Right cardiac atrium (tissue), 5 donors: ENCODE measurements at regions of chr11 and their contacts with region 1.

Region 1: GRCh38 chr11:10307442-10308207 is 2.8 kb downstream of the ADM start:
- DNase-seq: peak; percentile 83 to 94 (median 94)
- ATAC-seq: peak; percentile 65 to 73
- H3K4me3 ChIP-seq: peak overlapping the region; percentile 48
- H3K27ac ChIP-seq: peak overlapping the region; percentile 85
- H3K4me1 ChIP-seq: peaks cover 4% of the 10 kb centered on the region
- H3K27me3 ChIP-seq: no peaks in the 10 kb centered on the region

Region 2: GRCh38 chr11:9757809-9758636 is 549.6 kb before region 1 on chr11:
- intact Hi-C with region 1: loop called (anchors 5 kb)
- DNase-seq: peak; percentile 90 to 97 (median 96)
- ATAC-seq: peak; percentile 72 to 75
- H3K4me3 ChIP-seq: peak overlapping the region; percentile 57
- H3K27ac ChIP-seq: peak overlapping the region; percentile 86
- H3K4me1 ChIP-seq: peaks cover 9% of the 10 kb centered on the region
- H3K27me3 ChIP-seq: no peaks in the 10 kb centered on the region

Region 3: DNA sequence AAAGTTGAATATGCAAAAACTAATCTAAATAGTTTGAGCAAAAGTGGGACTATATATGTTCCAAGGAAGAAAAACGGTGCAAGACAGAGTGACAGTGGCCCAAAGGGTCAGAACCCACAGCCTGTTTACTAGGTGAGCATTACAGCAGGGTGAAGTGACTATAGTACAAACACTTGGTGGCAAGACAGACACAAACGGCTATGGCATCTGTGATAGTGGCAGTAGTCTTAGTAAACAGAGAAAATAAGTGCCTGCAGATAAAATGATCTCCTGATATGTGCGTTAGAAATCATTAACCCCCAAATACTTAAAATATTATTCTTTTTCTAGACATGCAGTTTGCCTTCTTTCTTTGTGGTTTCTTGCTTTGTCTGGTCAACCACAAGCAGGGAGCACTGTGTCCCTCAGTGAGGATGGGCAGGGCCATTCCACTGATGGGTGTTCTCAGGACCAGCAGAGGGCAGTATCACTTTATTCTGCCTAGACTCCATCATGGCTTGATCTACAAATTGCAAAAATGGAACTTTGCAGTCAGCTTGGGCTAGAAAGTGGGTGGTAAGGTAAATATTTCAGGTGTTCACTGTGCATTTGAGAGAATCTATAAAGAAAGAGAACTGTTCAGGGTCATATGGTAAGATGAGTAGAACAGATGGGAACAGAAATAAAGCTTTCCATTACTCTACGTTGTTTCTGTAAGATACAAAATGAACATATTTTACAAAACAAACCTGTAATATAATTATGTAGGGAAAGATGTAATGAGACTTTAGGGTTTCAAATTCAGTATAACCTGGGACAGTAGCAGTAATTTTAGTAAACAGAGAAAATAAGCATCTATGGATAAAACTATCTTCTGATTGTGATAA is 445.5 kb before region 1 on chr11:
- intact Hi-C with region 1: loop called in 1 of 4 experiments (anchors 5 kb)
- DNase-seq: peak in 2 of 3 donors; percentile 17 to 57
- ATAC-seq: peak; percentile 83 to 91
- H3K4me3 ChIP-seq: no peak overlapping the region
- H3K27ac ChIP-seq: no peak overlapping the region
- H3K4me1 ChIP-seq: peaks cover 5% of the 10 kb centered on the region
- H3K27me3 ChIP-seq: no peaks in the 10 kb centered on the region

Region 4: GRCh38 chr11:9972989-9973388 is 334.6 kb before region 1 on chr11:
- intact Hi-C with region 1: loop called in 2 of 4 experiments (anchors 10 kb)
- DNase-seq: no peak
- ATAC-seq: peak; percentile 65 to 75
- H3K4me3 ChIP-seq: no peak overlapping the region
- H3K27ac ChIP-seq: no peak overlapping the region
- H3K4me1 ChIP-seq: no peaks in the 10 kb centered on the region
- H3K27me3 ChIP-seq: no peaks in the 10 kb centered on the region

Region 5: DNA sequence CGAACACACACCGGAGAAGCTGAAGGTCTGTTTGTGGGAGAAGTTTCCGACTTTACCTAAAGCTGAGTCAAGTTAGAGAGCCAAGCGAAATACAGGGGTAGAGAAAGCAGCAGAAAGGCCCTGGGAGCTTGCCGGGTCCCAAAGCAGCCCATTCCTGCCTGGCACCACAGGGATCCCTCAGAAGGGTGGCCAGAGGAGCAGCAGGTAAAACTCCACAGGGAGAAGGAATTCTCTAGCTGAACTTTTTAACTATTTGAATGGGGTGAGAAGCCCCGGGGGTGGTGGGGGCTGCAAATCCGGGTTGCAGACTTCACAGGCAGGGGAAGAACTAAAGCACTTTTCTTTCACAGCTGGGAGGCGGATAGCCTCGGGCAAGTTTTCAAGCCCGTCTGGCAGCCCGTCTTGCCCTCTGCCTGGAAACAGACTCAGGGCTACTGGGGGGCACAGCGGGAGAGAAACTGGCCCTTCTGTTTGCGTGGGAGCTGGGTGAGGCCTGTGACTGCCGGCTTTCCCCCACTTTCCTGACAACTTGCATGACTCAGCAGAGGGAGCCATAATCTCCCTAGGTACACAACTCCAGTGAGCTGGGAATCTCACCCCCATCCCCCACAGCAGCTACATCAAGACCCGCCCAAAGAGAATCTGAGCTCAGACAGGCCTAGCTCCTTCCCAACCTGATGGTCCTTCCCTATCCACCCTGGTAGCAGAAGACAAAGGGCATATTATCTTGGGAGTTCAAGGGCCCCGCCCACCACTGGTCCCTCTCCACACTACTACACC is 324.6 kb before region 1 on chr11:
- intact Hi-C with region 1: loop called in 3 of 4 experiments (anchors 5 to 10 kb)
- DNase-seq: no peak
- ATAC-seq: no peak
- H3K4me3 ChIP-seq: no peak overlapping the region
- H3K27ac ChIP-seq: no peak overlapping the region
- H3K4me1 ChIP-seq: no peaks in the 10 kb centered on the region
- H3K27me3 ChIP-seq: no peaks in the 10 kb centered on the region

Region 6: DNA sequence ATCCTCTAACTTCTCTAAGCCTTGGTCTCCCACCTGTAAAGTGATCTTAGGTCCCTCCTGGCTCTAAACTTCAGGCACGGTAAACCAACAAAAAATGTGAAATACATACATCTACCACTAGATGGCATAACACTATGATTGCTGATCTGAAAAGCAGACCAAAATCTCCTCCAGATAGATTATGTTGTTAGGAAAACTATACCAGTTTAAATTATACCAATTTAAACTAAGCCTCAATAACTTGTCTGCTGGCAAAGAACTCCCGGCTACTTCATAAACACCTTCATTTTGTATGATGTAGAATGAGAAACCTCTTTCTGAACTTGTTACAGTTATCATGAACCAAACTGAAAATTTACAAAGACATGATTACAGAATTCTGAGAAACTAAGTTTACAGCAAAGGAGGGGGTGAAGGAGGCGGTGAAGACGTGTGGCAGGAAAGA is 99.5 kb before region 1 on chr11:
- intact Hi-C with region 1: loop called in 2 of 4 experiments (anchors 5 kb)
- DNase-seq: no peak
- ATAC-seq: peak in 1 of 2 donors; percentile 53
- H3K4me3 ChIP-seq: no peak overlapping the region
- H3K27ac ChIP-seq: no peak overlapping the region
- H3K4me1 ChIP-seq: no peaks in the 10 kb centered on the region
- H3K27me3 ChIP-seq: no peaks in the 10 kb centered on the region

Region 7: DNA sequence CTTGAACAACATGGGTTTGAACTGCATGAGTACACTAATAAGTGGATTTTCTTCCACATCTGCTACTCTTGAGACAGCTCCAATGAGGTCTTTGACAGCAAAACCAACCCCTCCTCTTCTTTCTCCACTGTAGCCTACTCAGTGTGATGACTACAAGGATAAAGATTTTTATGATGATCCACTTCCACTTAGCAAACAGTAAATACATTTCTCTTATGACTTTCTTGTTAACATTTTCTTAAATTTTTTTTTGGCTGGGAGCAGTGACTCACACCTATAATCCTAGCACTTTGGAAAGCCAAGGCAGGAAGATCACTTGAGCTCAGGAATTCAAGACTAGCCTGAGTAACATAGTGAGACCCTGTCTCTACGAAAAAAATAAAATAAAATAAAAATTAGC is 511.0 kb after region 1 on chr11:
- intact Hi-C with region 1: no loop called
- DNase-seq: no peak
- ATAC-seq: no peak
- H3K4me3 ChIP-seq: no peak overlapping the region
- H3K27ac ChIP-seq: no peak overlapping the region
- H3K4me1 ChIP-seq: no peaks in the 10 kb centered on the region
- H3K27me3 ChIP-seq: no peaks in the 10 kb centered on the region